ENCODE measurements at regions of chr4 and their contacts with region 1.

Region 1: GRCh38 chr4:173420324-173420752 is 21.4 kb upstream of the SCRG1 start:
- DNase-seq: no peak
- H3K4me3 ChIP-seq: peak overlapping the region in 38 of 59 donors; percentile 3 to 65 (median 39)
- H3K27ac ChIP-seq: peak overlapping the region in 20 of 59 donors; percentile 9 to 76 (median 58)
- H3K27me3 ChIP-seq: no peaks in the 10 kb centered on the region
- CTCF ChIP-seq: peak; percentile 21 to 84 (median 66)

Region 2: GRCh38 chr4:173013232-173013930 is 407.0 kb before region 1 on chr4:
- intact Hi-C with region 1: loop called in 1 of 2 experiments (anchors 10 kb)
- DNase-seq: peak in 2 of 10 donors; percentile 51 to 59
- H3K4me3 ChIP-seq: no peak overlapping the region
- H3K27ac ChIP-seq: peak overlapping the region in 4 of 59 donors; percentile 22 to 75 (median 26)
- H3K27me3 ChIP-seq: no peaks in the 10 kb centered on the region
- CTCF ChIP-seq: peak; percentile 62 to 88 (median 77)

Region 3: DNA sequence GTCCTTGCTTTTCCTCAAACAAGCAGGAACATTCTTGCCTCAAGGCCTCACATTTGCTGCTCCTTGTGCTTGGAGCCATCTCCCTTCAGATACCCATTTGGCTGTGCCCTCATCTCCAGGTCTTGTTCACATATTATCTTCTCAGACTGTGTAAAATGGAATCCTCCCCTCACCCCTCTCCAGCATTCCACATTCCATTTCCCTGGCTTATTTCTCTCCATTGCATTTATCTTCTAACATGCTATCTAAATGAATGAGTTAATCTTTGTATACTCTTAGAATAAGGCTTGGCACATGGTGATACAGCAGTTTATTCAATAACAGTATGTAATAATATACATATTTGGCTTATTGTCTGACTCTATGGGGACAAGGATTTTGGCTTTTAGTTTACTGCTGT is 260.5 kb before region 1 on chr4:
- intact Hi-C with region 1: no loop called
- DNase-seq: no peak
- H3K4me3 ChIP-seq: no peak overlapping the region
- H3K27ac ChIP-seq: no peak overlapping the region
- H3K27me3 ChIP-seq: no peaks in the 10 kb centered on the region
- CTCF ChIP-seq: no peak

Region 4: DNA sequence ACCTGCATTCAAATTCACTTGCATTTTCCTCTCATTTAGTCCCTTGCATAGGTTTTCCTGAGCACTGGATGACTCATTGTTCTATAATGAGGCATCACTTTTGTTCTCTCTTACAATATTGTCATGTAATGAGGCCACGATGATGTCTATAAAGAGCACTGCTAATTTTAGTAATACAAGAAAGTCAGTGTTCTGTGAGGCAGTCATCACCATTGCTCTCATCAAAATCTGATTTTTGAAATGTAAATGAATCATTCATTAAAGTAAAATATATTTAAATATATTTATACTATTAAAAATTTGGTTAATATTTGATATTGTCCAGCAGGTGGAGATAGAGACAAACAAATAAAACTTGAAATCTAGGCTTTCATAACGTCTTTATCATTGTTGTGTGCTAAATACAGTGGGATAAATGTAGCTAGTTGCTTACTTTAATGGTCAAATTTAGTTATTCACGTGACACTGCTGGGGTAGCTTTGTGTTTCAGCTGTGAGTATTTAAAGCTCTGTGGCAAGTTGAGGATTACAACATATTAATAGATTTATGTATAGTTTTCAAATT is 101.6 kb before region 1 on chr4:
- intact Hi-C with region 1: loop called (anchors 1 to 2 kb)
- DNase-seq: no peak
- H3K4me3 ChIP-seq: no peak overlapping the region
- H3K27ac ChIP-seq: peak overlapping the region in 40 of 59 donors; percentile 0 to 72 (median 32)
- H3K27me3 ChIP-seq: no peaks in the 10 kb centered on the region
- CTCF ChIP-seq: peak in 55 of 56 donors; percentile 34 to 88 (median 67)

Region 5: DNA sequence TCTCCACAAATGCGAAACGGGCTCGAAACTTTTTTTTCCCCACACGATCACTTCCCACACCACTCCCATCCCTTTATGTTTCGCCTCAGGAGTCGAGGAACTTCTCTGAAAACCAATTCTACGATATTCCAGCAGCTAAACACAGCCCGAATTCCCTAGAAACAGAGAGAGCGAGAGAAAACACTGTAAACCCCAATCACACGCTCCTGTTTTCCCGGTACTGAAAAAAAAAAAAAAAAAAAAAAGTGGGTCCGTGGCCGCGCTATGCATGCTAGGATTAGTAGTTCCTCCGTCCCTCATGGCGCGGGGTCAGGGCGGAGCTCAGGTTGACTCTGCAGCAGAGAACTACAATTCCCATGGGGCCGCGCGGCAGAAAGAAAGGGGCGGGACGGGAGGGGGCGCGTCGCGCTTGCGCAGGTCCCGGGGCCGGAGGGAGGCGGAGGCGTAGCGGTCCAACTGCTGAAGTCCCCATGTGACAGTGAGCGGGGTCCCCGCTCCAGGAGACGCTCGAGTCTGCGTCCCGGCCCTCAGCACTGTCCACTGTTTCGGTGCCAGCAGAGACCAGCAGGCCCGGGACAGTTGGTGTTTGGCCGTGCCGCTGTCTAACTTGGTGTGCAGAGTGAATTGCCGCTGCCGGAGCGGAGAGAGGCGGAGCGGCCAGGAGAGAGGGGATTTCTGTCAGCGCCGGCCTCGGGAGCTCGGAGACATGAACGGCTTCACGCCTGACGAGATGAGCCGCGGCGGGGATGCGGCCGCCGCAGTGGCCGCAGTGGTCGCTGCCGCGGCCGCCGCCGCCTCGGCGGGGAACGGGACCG is 49.7 kb before region 1 on chr4 and contains the start of gene SAP30:
- intact Hi-C with region 1: loop called (anchors 1 to 2 kb)
- DNase-seq: peak; percentile 95 to 98 (median 97)
- H3K4me3 ChIP-seq: peak within 1 kb of the TSS; percentile 62 to 93 (median 84)
- H3K27ac ChIP-seq: peak within 1 kb of the TSS; percentile 90 to 100 (median 98)
- H3K27me3 ChIP-seq: no peaks in the 10 kb centered on the region
- CTCF ChIP-seq: peak in 9 of 56 donors; percentile 10 to 27 (median 15)
- total RNA-seq, gene SAP30: 15.2 to 36.3 (median 25.7) TPM